ENCODE measurements at regions of chr6 and their contacts with region 1.

Region 1: DNA sequence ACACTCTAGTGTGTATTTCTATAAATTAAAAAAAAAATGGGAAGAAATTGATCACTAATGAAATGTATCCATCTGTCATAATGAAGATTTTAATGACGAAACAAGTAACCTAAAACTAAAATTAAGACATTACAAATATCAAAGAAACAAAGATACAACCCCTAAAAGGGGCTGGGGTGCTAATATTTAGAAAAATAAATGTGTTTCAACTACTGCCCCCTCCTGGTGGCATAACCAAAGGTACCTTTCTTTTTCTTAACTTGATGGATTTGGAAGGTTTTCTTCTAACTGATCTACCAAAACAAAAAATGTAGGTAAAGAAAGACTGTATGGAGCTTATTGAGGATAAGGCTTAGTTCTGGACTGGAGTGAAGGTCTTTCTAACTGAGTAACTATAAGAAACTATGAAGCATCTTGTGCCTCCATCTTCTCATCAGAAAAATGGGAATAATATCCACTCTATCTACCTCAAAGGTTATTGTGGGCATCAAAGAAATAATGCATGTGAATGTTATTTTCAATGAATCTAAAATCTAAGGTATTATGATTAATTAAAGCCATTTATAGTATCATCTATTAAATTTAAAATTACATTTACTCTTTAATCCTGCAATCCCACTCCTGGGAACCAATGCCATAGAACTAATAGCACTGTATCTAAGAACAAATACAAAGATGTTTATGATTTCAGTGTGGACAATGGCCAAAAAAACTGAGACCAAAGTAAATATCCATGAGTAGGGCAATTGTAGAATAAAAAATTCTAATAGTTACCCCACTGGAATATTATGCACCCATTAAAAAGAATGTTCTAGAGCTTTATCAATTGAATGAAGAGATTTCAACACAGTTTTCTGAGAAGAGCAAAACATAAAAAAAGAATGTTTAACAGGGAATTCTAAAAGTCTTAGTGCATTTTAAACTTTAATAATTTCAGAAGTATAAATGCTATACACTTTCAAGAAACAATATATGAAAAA is 117.2 kb downstream of the BACH2 start:
- DNase-seq: peak in 3 of 9 donors; percentile 39 to 53 (median 43)
- ATAC-seq: no peak
- H3K4me3 ChIP-seq: no peak overlapping the region
- H3K4me3 Mint-ChIP-seq: peak overlapping the region in 5 of 10 donors; percentile 8 to 83 (median 72)
- H3K27ac ChIP-seq: peak overlapping the region; percentile 64
- H3K27ac Mint-ChIP-seq: peak overlapping the region in 8 of 9 donors; percentile 58 to 97 (median 88)
- H3K4me1 ChIP-seq: peaks cover 0 to 69% of the 10 kb centered on the region in 2 donors
- H3K4me1 Mint-ChIP-seq: peaks cover 49 to 92% (median 86%) of the 10 kb centered on the region in 7 donors
- H3K27me3 ChIP-seq: no peaks in the 10 kb centered on the region
- H3K27me3 Mint-ChIP-seq: no peaks in the 10 kb centered on the region

Region 2: GRCh38 chr6:89970609-89971337 is 208.7 kb before region 1 on chr6:
- CTCF ChIA-PET with region 1: interaction called, 4 read pairs
- POLR2A ChIA-PET with region 1: no interaction called
- intact Hi-C with region 1: loop called (anchors 2 to 5 kb)
- DNase-seq: peak in 7 of 9 donors; percentile 31 to 54 (median 39)
- ATAC-seq: peak; percentile 72
- H3K4me3 ChIP-seq: no peak overlapping the region
- H3K4me3 Mint-ChIP-seq: no peak overlapping the region
- H3K27ac ChIP-seq: no peak overlapping the region
- H3K27ac Mint-ChIP-seq: no peak overlapping the region
- H3K4me1 ChIP-seq: peaks cover 0 to 15% of the 10 kb centered on the region in 2 donors
- H3K4me1 Mint-ChIP-seq: peaks cover 9 to 53% (median 40%) of the 10 kb centered on the region in 7 donors
- H3K27me3 ChIP-seq: no peaks in the 10 kb centered on the region
- H3K27me3 Mint-ChIP-seq: no peaks in the 10 kb centered on the region

Region 3: DNA sequence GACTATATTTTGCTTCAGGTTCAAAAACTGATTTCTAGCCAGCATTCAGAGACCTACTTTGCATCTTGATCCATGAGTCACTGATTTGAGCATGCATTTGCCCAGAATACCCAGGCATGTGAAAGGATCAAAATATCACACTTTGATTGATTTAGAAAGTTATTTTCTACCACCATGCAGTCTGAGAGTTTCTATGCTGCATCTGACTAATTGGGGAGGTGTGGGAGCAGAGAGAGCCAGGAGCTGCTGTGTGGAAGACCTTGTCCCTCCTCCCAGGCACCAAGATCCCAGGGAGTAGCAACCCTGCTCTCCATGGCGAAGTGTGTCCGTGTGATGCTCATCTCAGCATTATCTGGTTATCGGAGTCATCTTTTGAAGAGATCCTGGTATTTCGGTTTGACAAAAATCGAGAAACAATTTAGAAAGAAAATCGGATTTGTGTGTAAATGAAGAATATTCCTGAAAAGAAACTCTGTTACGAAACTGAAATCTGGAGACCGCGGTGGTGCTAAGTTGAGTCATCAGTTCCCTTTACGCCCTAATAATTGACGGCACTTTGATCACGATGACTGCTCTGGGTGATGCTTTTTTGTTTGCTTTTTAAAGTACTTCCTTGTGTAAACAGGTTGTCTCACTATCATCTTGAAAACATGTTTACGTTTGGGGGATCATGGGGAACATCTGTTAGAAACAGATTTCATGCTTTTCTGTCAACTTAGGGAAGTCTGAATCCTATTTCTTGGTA is 76.3 kb before region 1 on chr6:
- CTCF ChIA-PET with region 1: no interaction called
- POLR2A ChIA-PET with region 1: no interaction called
- intact Hi-C with region 1: loop called (anchors 5 kb)
- DNase-seq: peak in 1 of 9 donors; percentile 41
- ATAC-seq: peak; percentile 59
- H3K4me3 ChIP-seq: peak overlapping the region; percentile 44
- H3K4me3 Mint-ChIP-seq: peak overlapping the region in 9 of 10 donors; percentile 6 to 69 (median 51)
- H3K27ac ChIP-seq: no peak overlapping the region
- H3K27ac Mint-ChIP-seq: peak overlapping the region in 8 of 9 donors; percentile 33 to 85 (median 72)
- H3K4me1 ChIP-seq: peaks cover 14 to 57% of the 10 kb centered on the region in 2 donors
- H3K4me1 Mint-ChIP-seq: peaks cover 41 to 97% (median 84%) of the 10 kb centered on the region in 7 donors
- H3K27me3 ChIP-seq: no peaks in the 10 kb centered on the region
- H3K27me3 Mint-ChIP-seq: no peaks in the 10 kb centered on the region

Region 4: DNA sequence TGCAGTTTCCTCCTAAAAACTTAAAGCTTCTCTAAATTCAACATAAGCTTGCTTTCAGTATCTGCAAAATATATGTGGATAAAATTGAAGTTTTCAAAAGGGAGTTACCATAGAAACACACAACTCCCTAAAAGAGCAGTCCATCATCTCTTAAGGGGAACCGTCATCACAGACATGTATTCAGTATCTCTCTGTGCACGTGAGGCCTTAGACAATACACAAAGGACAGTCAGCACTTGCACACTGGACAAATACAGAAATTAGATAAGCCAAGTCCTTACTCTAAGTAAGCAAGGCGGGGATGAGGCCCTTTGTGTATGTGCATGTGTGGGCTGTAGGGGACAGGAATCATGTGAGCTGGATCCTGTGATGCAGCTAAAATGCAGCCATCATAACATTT is 19.5 kb before region 1 on chr6:
- CTCF ChIA-PET with region 1: interaction called, 4 read pairs
- POLR2A ChIA-PET with region 1: interaction called, 13 read pairs
- intact Hi-C with region 1: loop called (anchors 1 to 2 kb)
- DNase-seq: no peak
- ATAC-seq: peak; percentile 41
- H3K4me3 ChIP-seq: no peak overlapping the region
- H3K4me3 Mint-ChIP-seq: peak overlapping the region in 9 of 10 donors; percentile 3 to 73 (median 48)
- H3K27ac ChIP-seq: peak overlapping the region; percentile 28
- H3K27ac Mint-ChIP-seq: peak overlapping the region in 8 of 9 donors; percentile 84 to 94 (median 92)
- H3K4me1 ChIP-seq: peaks cover 8 to 77% of the 10 kb centered on the region in 2 donors
- H3K4me1 Mint-ChIP-seq: peaks cover 18 to 96% (median 83%) of the 10 kb centered on the region in 7 donors
- H3K27me3 ChIP-seq: no peaks in the 10 kb centered on the region
- H3K27me3 Mint-ChIP-seq: no peaks in the 10 kb centered on the region

Region 5: GRCh38 chr6:90216072-90216977 is 36.8 kb after region 1 on chr6:
- CTCF ChIA-PET with region 1: interaction called, 11 read pairs
- POLR2A ChIA-PET with region 1: interaction called, 7 read pairs
- intact Hi-C with region 1: no loop called
- DNase-seq: peak in 5 of 9 donors; percentile 61 to 82 (median 63)
- ATAC-seq: peak; percentile 69
- H3K4me3 ChIP-seq: peak overlapping the region; percentile 18
- H3K4me3 Mint-ChIP-seq: peak overlapping the region in 7 of 10 donors; percentile 42 to 74 (median 68)
- H3K27ac ChIP-seq: peak overlapping the region; percentile 85
- H3K27ac Mint-ChIP-seq: no peak overlapping the region
- H3K4me1 ChIP-seq: peaks cover 0 to 97% of the 10 kb centered on the region in 2 donors
- H3K4me1 Mint-ChIP-seq: peaks cover 0 to 33% (median 31%) of the 10 kb centered on the region in 7 donors
- H3K27me3 ChIP-seq: no peaks in the 10 kb centered on the region
- H3K27me3 Mint-ChIP-seq: no peaks in the 10 kb centered on the region

Region 6: DNA sequence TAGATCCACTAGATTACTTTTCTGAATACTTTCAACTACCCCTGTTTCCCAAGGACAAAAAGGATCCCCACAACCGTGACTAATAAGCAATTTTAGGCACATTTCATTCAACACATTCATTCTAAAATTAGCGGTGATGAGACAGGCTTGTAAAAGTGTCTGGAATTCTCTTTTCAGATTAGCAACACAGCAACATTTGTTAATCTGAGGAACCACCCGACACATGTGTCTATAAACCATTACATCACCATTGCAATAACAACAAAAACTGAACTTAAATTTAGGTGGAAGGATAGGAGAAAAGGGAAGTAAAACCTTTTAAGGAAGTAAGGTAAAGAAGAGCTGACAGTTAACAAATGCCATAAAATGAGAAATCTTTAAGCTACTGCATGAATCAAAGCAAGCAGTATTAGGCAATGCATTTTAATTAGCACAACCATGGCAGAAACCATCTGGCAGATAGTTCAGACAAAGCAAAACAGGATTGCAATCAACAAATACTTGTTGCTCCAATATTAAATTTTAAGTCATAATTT is 358.3 kb after region 1 on chr6:
- CTCF ChIA-PET with region 1: no interaction called
- POLR2A ChIA-PET with region 1: no interaction called
- intact Hi-C with region 1: no loop called
- DNase-seq: no peak
- ATAC-seq: peak; percentile 77
- H3K4me3 ChIP-seq: no peak overlapping the region
- H3K4me3 Mint-ChIP-seq: no peak overlapping the region
- H3K27ac ChIP-seq: no peak overlapping the region
- H3K27ac Mint-ChIP-seq: peak overlapping the region in 1 of 9 donors; percentile 67
- H3K4me1 ChIP-seq: no peaks in the 10 kb centered on the region
- H3K4me1 Mint-ChIP-seq: peaks cover 0 to 24% (median 0%) of the 10 kb centered on the region in 7 donors
- H3K27me3 ChIP-seq: no peaks in the 10 kb centered on the region
- H3K27me3 Mint-ChIP-seq: no peaks in the 10 kb centered on the region

Measured in naive thymus-derived CD4-positive, alpha-beta T cell (primary cell).